PC-3 (cell line): ENCODE measurements at regions of chr17 and their contacts with region 1.

Region 1: DNA sequence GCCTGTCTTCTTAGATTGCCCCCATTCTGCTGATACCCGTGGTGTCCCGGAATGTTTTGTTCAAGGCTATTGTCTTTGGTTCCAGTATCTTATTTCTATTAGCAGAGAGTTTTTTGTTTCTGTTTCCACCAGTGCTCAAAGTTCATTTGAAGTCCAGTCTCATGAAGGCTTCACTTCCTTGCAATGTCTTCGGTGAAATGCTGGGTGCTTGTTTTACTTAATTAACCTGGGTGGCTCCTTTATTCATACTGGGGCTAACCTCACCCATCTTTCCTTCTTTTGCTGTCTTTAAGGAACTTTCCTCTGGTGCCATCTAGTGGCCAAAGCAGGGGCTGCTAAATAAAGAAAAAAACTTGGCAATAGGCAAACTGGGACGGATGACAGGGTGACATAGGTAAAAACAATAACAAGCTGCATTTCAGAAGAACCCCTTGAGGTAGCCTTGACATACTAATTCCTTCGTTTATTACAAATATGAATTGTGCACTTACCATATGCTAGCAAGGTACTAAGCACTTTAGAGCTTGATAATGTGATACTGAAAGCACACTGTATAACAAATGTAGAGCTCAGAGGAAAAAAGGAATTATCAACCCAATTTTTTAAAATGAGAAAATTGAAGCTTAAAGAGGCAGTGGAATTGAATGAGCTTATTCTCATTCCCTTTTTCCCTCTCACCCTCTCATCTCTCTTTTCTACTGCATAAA is 2.8 kb upstream of the SMIM36 start:
- DNase-seq: peak; percentile 96
- ATAC-seq: peak; percentile 81
- H3K4me3 ChIP-seq: no peak overlapping the region
- H3K27ac ChIP-seq: no peak overlapping the region
- H3K4me1 ChIP-seq: no peaks in the 10 kb centered on the region
- H3K27me3 ChIP-seq: peaks cover 15% of the 10 kb centered on the region
- CTCF ChIP-seq: peak; percentile 99

Region 2: GRCh38 chr17:55053855-55054254 is 460.2 kb before region 1 on chr17:
- CTCF ChIA-PET with region 1: no interaction called
- POLR2A ChIA-PET with region 1: no interaction called
- intact Hi-C with region 1: loop called (anchors 5 kb)
- DNase-seq: peak; percentile 39
- ATAC-seq: no peak
- H3K4me3 ChIP-seq: no peak overlapping the region
- H3K27ac ChIP-seq: no peak overlapping the region
- H3K4me1 ChIP-seq: peaks cover 16% of the 10 kb centered on the region
- H3K27me3 ChIP-seq: no peaks in the 10 kb centered on the region
- CTCF ChIP-seq: peak; percentile 75

Region 3: DNA sequence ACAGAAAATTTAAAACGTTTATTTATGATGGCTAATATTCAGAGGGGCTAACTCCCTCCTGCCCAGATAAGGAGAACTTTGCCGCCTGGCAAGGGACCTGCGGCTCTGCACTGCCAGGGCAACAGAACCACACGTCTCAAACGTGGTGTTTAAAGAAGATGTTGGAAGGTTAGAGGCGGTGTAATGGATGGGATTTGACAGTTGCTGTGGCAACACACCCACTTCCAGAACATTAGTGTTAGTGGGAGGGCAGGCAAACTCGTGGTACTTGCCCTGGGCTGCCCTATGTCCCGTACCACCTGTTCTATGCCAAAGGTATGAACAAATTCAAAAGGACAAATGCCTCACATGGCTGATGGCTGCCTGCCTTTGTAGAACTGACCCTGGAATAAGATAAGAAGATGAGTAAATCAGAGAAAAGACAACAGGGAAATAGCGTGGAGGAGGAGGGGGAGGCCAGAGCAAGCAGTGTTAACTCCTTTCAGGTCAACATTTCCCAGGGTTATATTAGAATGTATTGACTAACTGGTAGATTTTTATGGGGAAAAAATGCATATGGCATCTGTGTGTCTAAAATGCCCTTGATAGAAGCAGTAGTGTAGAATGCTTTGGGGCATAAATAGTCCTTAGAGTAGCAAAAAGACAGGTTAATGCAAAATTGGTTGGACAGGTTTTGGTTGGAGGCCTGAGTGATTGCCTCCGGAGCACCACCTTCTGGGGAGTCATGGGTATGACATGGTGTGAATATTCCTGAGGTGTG is 218.4 kb before region 1 on chr17:
- CTCF ChIA-PET with region 1: no interaction called
- POLR2A ChIA-PET with region 1: no interaction called
- intact Hi-C with region 1: loop called (anchors 2 kb)
- DNase-seq: peak; percentile 79
- ATAC-seq: peak; percentile 93
- H3K4me3 ChIP-seq: no peak overlapping the region
- H3K27ac ChIP-seq: no peak overlapping the region
- H3K4me1 ChIP-seq: no peaks in the 10 kb centered on the region
- H3K27me3 ChIP-seq: no peaks in the 10 kb centered on the region
- CTCF ChIP-seq: peak; percentile 94

Region 4: DNA sequence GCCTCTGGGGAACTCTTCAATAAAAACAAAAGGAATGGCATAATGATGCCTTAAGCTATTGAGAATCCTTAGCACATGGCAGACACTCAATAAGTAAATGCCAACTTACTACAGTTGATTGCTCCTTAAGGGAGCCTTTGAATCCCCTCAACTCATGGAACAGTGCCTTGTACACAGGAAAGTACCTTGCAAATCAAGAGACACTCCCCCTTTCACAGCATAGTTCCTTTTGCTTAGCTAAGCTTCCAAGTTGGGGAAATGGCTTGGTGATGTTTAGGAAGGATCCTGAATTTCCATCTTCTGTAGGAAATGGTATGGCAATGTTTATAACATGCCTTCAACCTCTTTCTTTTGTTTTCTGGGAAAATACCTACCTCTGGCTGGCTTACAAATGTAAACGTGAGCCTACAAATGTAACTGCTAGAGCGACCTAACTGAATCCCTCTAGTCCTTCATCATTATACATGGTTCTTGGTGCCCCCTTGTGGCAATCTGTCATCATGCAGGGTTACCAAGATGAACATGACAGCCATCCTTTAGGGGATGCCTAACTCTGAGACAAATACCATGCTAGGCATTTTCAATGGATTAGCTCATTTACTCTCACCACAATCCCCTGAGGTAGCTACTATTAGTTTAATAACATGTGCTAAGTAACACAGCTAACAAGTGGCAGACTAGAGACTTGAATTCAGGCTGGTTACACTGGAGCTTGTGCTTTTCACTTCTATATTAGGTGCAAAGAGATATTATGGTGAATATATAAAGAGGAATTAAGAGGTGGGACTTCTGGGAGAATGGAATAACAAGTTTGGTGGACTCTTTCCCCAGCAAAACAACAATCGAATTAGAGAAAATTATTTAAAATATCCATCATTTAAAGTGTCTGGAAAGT is 157.4 kb before region 1 on chr17:
- CTCF ChIA-PET with region 1: interaction called, 9 read pairs
- POLR2A ChIA-PET with region 1: no interaction called
- intact Hi-C with region 1: loop called (anchors 2 kb)
- DNase-seq: peak; percentile 93
- ATAC-seq: peak; percentile 100
- H3K4me3 ChIP-seq: no peak overlapping the region
- H3K27ac ChIP-seq: no peak overlapping the region
- H3K4me1 ChIP-seq: no peaks in the 10 kb centered on the region
- H3K27me3 ChIP-seq: no peaks in the 10 kb centered on the region
- CTCF ChIP-seq: peak; percentile 96

Region 5: DNA sequence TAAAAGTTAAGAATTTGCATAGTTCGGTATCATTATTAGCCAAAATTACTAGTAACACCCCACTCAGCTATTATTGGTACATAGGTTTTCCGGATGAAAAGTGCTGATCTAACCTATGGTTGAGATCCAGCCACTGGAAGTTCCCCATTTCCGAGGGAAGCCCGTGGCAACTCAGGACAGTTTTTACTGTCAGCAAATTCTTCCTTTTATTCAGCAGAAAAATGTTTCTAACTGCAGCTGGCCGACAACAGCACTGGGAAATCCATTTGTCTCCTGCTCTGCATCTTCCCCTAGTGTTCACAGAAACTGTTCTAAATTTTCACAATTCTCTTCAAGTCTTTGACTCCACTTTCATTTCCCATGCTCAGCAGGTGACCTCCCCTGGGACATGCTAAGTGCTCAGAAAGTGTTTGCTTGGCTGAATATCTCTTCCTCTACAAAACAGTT is 76.9 kb before region 1 on chr17:
- CTCF ChIA-PET with region 1: interaction called, 4 read pairs
- POLR2A ChIA-PET with region 1: no interaction called
- intact Hi-C with region 1: loop called (anchors 2 kb)
- DNase-seq: no peak
- ATAC-seq: no peak
- H3K4me3 ChIP-seq: no peak overlapping the region
- H3K27ac ChIP-seq: no peak overlapping the region
- H3K4me1 ChIP-seq: peaks cover 27% of the 10 kb centered on the region
- H3K27me3 ChIP-seq: no peaks in the 10 kb centered on the region
- CTCF ChIP-seq: no peak

Region 6: DNA sequence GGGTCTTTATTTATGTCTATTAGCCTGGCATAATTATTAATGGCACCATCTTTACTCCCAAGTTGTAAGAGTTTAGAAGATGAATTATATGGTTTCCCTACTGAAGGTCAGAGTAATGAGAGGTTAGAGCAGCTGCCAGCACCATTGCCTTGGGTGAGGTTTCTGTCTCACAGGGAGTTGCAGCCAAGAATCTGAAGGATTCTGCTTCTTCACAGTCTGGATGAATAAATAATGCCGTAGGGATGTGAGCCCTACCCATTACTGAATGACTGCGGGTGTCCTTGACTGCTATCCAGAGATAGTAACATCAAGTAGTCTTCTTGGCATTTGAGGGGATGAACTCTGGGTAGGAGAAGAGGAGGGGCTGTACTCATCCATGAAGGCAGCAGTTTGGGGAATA is 50.0 kb after region 1 on chr17:
- CTCF ChIA-PET with region 1: no interaction called
- POLR2A ChIA-PET with region 1: no interaction called
- intact Hi-C with region 1: no loop called
- DNase-seq: no peak
- ATAC-seq: no peak
- H3K4me3 ChIP-seq: no peak overlapping the region
- H3K27ac ChIP-seq: no peak overlapping the region
- H3K4me1 ChIP-seq: no peaks in the 10 kb centered on the region
- H3K27me3 ChIP-seq: 0 out of 2 replicates have a peak, but pooled peaks cover 3% of the 10 kb centered on the region
- CTCF ChIP-seq: no peak

Region 7: DNA sequence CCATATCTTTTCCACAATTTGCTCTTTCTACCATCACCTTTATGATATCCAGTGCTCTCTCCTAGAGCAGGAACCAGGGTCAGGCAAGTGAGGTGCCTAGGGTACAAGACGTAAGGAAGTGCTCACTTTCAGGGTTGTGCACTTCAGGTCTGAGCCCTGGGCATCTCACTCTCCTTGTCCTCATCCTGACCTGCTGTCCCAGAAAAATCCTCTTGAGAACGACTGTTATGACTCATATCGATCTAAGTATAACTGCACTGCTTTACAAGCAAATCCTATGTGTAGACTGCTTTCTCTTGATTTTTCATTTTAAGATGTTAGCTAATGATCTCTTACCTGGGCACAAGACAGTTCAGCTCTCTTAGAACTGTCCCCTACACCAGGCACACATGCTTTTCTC is 108.5 kb after region 1 on chr17:
- CTCF ChIA-PET with region 1: no interaction called
- POLR2A ChIA-PET with region 1: no interaction called
- intact Hi-C with region 1: no loop called
- DNase-seq: no peak
- ATAC-seq: no peak; the same call in 1 of the 2 replicates
- H3K4me3 ChIP-seq: no peak overlapping the region
- H3K27ac ChIP-seq: no peak overlapping the region
- H3K4me1 ChIP-seq: no peaks in the 10 kb centered on the region
- H3K27me3 ChIP-seq: peaks cover 60% of the 10 kb centered on the region
- CTCF ChIP-seq: no peak